Left colon (tissue), 2 donors: ENCODE measurements at regions of chr17 and their contacts with region 1.

Region 1: GRCh38 chr17:63434876-63435684 is 11.0 kb downstream of the CYB561 start:
- DNase-seq: peak; percentile 79 to 86
- ATAC-seq: peak; percentile 47

Region 2: GRCh38 chr17:63600569-63601438 is 165.7 kb after region 1 on chr17 and contains the start of gene TACO1:
- intact Hi-C with region 1: loop called in 1 of 2 experiments (anchors 10 kb)
- DNase-seq: peak; percentile 80 to 84
- ATAC-seq: peak; percentile 91
- total RNA-seq, gene TACO1: 36.0 to 39.6 TPM